PC-9 (cell line): ENCODE measurements at regions of chr16 and their contacts with region 1.

Region 1: GRCh38 chr16:19521471-19522396 is at the start of gene GDE1:
- DNase-seq: peak; percentile 75 to 96
- H3K4me3 ChIP-seq: peak within 1 kb of the TSS; percentile 74
- H3K27ac ChIP-seq: peak within 1 kb of the TSS; percentile 76
- H3K4me1 ChIP-seq: peaks cover 68% of the 10 kb centered on the region
- H3K27me3 ChIP-seq: no peaks in the 10 kb centered on the region
- CTCF ChIP-seq: peak; percentile 46; the same call in 1 of the 2 replicates
- total RNA-seq, gene GDE1: 131 and 154 TPM in 2 replicates

Region 2: GRCh38 chr16:18801197-18801972 is 720.3 kb before region 1 on chr16 and contains the start of gene ARL6IP1:
- CTCF ChIA-PET with region 1: no interaction called
- POLR2A ChIA-PET with region 1: no interaction called
- intact Hi-C with region 1: loop called (anchors 2 kb)
- DNase-seq: peak; percentile 98 to 99
- H3K4me3 ChIP-seq: peak within 1 kb of the TSS; percentile 98
- H3K27ac ChIP-seq: peak within 1 kb of the TSS; percentile 85
- H3K4me1 ChIP-seq: peaks cover 48% of the 10 kb centered on the region
- H3K27me3 ChIP-seq: no peaks in the 10 kb centered on the region
- CTCF ChIP-seq: peak; percentile 91
- total RNA-seq, gene ARL6IP1: 294 and 338 TPM in 2 replicates

Region 3: GRCh38 chr16:19179546-19180490 is 341.9 kb before region 1 on chr16:
- CTCF ChIA-PET with region 1: no interaction called
- POLR2A ChIA-PET with region 1: no interaction called
- intact Hi-C with region 1: loop called (anchors 5 kb)
- DNase-seq: peak; percentile 56 to 63
- H3K4me3 ChIP-seq: no peak overlapping the region
- H3K27ac ChIP-seq: no peak overlapping the region
- H3K4me1 ChIP-seq: peaks cover 31% of the 10 kb centered on the region
- H3K27me3 ChIP-seq: no peaks in the 10 kb centered on the region
- CTCF ChIP-seq: peak; percentile 90

Region 4: DNA sequence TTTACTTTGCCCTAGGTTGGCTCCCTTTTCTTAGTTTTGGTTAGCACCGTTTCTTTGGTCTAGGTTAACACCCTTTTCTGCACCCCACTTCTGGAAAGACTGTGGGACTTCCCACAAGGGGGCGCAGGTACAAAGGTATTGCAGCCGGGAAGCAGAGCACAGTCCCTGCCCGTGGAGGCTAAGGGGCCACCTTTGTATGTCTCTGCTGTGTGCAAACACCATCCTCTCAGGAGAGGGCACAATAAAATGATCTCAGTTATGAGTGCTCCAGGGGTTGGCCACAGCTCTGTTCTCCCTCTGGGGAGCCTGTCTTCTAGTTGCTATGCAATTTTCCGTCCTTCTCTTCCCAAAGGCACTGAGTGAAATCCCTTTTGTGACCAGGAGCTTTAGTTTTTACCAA is 132.5 kb before region 1 on chr16:
- CTCF ChIA-PET with region 1: no interaction called
- POLR2A ChIA-PET with region 1: interaction called, 11 read pairs
- intact Hi-C with region 1: loop called (anchors 5 kb)
- DNase-seq: peak in 1 of 2 experiments; percentile 48
- H3K4me3 ChIP-seq: no peak overlapping the region
- H3K27ac ChIP-seq: no peak overlapping the region
- H3K4me1 ChIP-seq: peaks cover 49% of the 10 kb centered on the region
- H3K27me3 ChIP-seq: no peaks in the 10 kb centered on the region
- CTCF ChIP-seq: peak; percentile 57

Region 5: GRCh38 chr16:19488213-19488640 is 33.5 kb before region 1 on chr16:
- CTCF ChIA-PET with region 1: interaction called, 10 read pairs
- POLR2A ChIA-PET with region 1: no interaction called
- intact Hi-C with region 1: no loop called
- DNase-seq: no peak
- H3K4me3 ChIP-seq: no peak overlapping the region
- H3K27ac ChIP-seq: no peak overlapping the region
- H3K4me1 ChIP-seq: 0 out of 2 replicates have a peak, but pooled peaks cover 5% of the 10 kb centered on the region
- H3K27me3 ChIP-seq: no peaks in the 10 kb centered on the region
- CTCF ChIP-seq: no peak

Region 6: DNA sequence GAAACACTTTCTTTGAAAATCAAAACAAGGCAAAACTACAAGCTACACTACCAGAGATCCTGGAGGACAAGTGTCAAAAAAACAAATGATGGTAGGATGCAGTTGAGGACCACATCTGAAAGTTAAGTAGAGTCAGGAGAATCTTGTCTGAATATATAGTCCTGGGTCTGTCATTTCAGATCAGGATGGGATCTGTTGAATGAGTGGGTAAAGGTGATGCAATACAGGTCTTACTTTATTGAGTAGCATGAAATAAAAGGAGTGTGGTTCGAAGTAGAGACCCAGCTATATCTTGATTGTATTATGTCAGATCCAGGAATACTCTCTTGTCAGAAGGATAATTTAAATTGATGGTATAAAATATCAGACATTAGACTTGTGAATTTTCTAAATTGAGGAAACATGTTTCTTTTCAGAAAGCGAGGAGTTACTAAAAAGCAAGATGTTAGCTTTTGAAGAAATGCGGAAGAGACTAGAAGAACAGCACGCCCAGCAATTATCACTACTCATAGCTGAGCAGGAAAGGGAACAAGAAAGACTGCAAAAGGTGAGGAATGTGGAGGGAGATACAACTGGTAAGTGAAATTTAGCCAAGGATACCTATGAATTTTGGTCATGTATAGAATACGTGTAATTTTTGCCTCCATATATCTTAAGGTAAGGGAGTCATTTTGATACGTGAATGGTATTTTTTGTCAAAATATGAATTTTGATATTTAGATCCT is 18.7 kb after region 1 on chr16:
- CTCF ChIA-PET with region 1: no interaction called
- POLR2A ChIA-PET with region 1: no interaction called
- intact Hi-C with region 1: no loop called
- DNase-seq: no peak
- H3K4me3 ChIP-seq: no peak overlapping the region
- H3K27ac ChIP-seq: no peak overlapping the region
- H3K4me1 ChIP-seq: peaks cover 4% of the 10 kb centered on the region
- H3K27me3 ChIP-seq: no peaks in the 10 kb centered on the region
- CTCF ChIP-seq: no peak

Region 7: DNA sequence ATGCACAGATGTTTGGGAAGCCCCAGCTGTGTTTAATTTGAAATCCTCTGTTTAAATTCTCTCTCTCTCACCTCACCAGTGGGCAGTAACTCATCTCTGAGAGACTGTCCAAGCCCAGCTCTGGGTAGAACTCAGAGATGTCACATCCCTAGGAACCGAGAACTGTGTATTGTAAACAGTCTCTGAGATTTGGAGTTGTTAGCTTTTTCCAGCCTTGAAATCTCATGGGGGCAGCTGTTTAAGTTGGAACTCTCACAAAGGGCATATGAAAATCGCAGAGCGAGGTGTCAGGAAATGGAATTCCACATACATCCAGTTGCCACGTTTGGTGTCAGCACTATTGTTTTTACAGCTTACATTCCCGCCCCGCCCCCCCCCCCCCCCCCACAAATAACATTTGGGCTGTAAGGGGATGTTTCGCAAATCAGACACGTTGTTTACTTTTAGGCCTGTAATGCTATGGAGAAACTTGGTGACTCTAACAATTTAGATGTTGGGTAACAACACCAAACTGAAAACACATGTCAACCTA is 68.1 kb after region 1 on chr16:
- CTCF ChIA-PET with region 1: no interaction called
- POLR2A ChIA-PET with region 1: no interaction called
- intact Hi-C with region 1: no loop called
- DNase-seq: peak in 1 of 2 experiments; percentile 76
- H3K4me3 ChIP-seq: no peak overlapping the region
- H3K27ac ChIP-seq: no peak overlapping the region
- H3K4me1 ChIP-seq: peaks cover 22% of the 10 kb centered on the region
- H3K27me3 ChIP-seq: no peaks in the 10 kb centered on the region
- CTCF ChIP-seq: no peak